ENCODE measurements at regions of chr15 and their contacts with region 1.

Region 1: DNA sequence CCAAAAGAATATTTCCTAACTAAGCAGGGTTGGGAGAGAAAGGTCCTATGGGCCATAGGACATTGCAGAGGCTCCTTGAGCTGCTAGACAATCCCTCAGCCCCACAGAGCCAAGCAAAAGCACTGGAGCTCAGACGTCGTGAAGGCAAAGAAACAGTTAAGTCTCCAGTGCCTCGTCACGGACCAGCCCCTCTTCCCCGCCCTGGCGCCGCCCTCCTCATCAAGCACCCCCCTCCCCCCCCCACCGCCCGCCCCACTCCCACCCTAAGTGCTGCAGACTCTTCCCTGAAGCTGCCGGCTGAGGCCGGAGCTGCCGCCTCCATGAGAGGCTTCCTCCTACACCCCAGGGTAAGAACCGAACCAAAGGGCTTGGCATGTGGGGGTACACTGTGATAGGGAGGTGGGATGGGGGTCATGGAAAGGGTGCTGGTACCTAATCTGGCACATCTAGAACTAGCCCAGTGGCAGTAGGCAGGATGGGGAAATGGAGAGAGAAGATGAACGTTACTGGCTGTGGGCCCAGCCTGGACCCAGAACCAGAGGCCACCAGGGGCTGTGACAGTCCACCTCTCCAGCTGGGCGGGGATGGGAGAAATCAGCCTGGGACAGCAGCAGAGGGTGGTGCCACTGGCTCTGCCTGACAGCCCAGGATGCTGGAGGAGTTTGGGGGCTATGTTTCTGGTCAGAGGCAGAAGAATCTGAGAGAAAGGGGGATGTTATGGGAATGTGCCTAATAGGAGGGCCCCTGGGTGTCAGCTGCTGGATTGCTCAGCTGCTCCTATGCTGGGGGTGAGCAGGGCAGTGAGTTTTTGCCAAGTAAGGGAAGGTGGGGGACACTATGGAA is at the start of gene MAP1A:
- DNase-seq: peak; percentile 71
- ATAC-seq: peak; percentile 72
- H3K4me3 ChIP-seq: peak within 1 kb of the TSS; percentile 79
- H3K27ac ChIP-seq: peak within 1 kb of the TSS; percentile 81
- H3K4me1 ChIP-seq: peaks cover 20% of the 10 kb centered on the region
- H3K27me3 ChIP-seq: no peaks in the 10 kb centered on the region
- CTCF ChIP-seq: no peak
- POLR2A ChIP-seq: 0 out of 2 replicates have a peak, but pooled peaks have one; percentile 19
- RAD21 ChIP-seq: no peak
- total RNA-seq, gene MAP1A: 47.2 and 48.2 TPM in 2 replicates

Region 2: GRCh38 chr15:43492673-43493601 is 24.6 kb before region 1 on chr15 and contains the start of gene TP53BP1:
- CTCF ChIA-PET with region 1: interaction called, 8 read pairs
- POLR2A ChIA-PET with region 1: interaction called, 3 read pairs
- dilution Hi-C with region 1: no loop called
- in situ Hi-C with region 1: no loop called
- intact Hi-C with region 1: loop called (anchors 2 kb)
- DNase-seq: peak; percentile 94
- ATAC-seq: peak; percentile 99
- H3K4me3 ChIP-seq: peak within 1 kb of the TSS; percentile 91
- H3K27ac ChIP-seq: peak within 1 kb of the TSS; percentile 95
- H3K4me1 ChIP-seq: peaks cover 3% of the 10 kb centered on the region; the same call in 1 of the 2 replicates
- H3K27me3 ChIP-seq: no peaks in the 10 kb centered on the region
- CTCF ChIP-seq: no peak
- POLR2A ChIP-seq: peak; percentile 39; the same call in 1 of the 2 replicates
- RAD21 ChIP-seq: no peak
- total RNA-seq, gene TP53BP1: 64.5 and 73.9 TPM in 2 replicates

Region 3: DNA sequence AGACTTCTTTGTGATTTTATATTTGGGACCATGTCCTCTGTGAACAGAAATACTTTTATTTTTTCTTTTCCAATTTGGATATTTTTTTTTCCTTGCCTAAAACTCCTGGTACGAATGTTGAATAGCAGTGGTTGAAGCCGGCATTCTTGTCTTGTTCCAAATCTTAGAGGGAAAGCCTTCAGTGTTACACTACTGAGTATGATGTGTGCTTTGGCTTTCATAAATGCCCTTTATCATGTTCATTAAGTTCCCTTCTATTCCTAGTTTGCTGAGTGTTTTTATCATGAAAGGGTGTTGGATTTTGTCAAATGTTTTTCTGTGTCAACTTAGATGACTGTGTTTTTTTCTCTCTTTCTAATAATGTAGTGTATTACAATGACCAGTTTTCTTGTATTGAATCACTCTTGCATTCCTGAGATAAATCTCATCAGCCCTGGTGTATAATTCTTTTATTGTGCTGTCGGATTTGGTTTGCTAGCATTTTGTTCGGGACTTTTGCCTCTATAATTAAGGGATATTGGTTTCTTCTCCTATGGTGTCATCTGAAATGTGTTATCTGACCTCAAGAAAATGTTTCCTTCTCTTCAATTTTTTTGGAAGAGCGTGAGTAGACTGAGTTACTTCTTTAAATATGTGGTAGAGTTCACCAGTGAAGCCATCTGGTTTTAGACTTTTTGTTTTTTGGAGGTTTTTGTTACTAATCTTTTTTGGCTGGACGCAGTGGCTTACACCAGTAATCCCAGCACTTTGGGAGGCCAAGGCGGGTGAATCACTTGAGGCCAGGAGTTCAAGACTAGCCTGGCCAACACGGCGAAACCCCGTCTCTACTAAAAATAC is 33.2 kb after region 1 on chr15:
- CTCF ChIA-PET with region 1: no interaction called
- POLR2A ChIA-PET with region 1: no interaction called
- dilution Hi-C with region 1: no loop called
- in situ Hi-C with region 1: no loop called
- intact Hi-C with region 1: no loop called
- DNase-seq: peak; percentile 59
- ATAC-seq: peak; percentile 64
- H3K4me3 ChIP-seq: no peak overlapping the region
- H3K27ac ChIP-seq: no peak overlapping the region
- H3K4me1 ChIP-seq: peaks cover 1% of the 10 kb centered on the region; the same call in 1 of the 2 replicates
- H3K27me3 ChIP-seq: no peaks in the 10 kb centered on the region
- CTCF ChIP-seq: no peak
- POLR2A ChIP-seq: no peak
- RAD21 ChIP-seq: no peak